Ascending aorta (tissue), 2 donors: ENCODE measurements at regions of chr12 and their contacts with region 1.

Region 1: DNA sequence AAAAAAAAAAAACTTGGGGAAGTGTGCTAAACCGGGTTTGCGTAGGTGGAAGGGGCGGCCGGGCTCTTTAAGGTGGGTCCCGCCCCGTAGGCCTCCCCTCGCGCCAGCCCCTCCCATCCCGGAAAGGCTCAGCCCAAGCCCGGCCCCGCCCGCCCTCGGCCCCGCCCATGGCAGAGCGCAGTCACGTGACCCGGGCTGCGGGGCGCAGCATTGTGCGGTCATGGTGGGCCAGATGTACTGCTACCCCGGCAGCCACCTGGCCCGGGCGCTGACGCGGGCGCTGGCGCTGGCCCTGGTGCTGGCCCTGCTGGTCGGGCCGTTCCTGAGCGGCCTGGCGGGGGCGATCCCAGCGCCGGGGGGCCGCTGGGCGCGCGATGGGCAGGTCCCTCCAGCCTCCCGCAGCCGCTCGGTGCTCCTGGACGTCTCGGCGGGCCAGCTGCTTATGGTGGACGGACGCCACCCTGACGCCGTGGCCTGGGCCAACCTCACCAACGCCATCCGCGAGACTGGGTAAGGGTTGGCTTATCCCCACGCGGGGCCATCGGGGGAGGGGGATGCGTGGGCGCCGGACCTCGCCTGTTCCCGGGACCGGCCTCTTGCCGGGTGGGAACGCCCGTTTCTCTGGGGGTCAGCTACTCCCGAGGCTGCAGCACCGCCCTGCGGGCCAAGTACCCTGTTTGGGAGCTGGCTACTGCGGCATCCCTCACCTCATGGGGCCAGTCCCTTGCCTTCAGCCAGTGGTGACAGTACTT is at the start of gene PLBD2:
- DNase-seq: peak; percentile 77 to 97
- H3K4me3 ChIP-seq: peak within 1 kb of the TSS; percentile 67 to 84
- H3K27ac ChIP-seq: peak within 1 kb of the TSS; percentile 86 to 88
- H3K4me1 ChIP-seq: peaks cover 0 to 14% of the 10 kb centered on the region in 2 donors
- H3K27me3 ChIP-seq: no peaks in the 10 kb centered on the region
- CTCF ChIP-seq: peak in 1 of 3 experiments; percentile 16
- total RNA-seq, gene PLBD2: 55.1 TPM

Region 2: GRCh38 chr12:113299619-113300237 is 58.8 kb before region 1 on chr12:
- intact Hi-C with region 1: loop called (anchors 1 kb)
- DNase-seq: peak; percentile 42 to 84
- H3K4me3 ChIP-seq: peak overlapping the region in 1 of 2 donors; percentile 33
- H3K27ac ChIP-seq: peak overlapping the region; percentile 73 to 95
- H3K4me1 ChIP-seq: peaks cover 14 to 30% of the 10 kb centered on the region in 2 donors
- H3K27me3 ChIP-seq: no peaks in the 10 kb centered on the region
- CTCF ChIP-seq: no peak

Region 3: DNA sequence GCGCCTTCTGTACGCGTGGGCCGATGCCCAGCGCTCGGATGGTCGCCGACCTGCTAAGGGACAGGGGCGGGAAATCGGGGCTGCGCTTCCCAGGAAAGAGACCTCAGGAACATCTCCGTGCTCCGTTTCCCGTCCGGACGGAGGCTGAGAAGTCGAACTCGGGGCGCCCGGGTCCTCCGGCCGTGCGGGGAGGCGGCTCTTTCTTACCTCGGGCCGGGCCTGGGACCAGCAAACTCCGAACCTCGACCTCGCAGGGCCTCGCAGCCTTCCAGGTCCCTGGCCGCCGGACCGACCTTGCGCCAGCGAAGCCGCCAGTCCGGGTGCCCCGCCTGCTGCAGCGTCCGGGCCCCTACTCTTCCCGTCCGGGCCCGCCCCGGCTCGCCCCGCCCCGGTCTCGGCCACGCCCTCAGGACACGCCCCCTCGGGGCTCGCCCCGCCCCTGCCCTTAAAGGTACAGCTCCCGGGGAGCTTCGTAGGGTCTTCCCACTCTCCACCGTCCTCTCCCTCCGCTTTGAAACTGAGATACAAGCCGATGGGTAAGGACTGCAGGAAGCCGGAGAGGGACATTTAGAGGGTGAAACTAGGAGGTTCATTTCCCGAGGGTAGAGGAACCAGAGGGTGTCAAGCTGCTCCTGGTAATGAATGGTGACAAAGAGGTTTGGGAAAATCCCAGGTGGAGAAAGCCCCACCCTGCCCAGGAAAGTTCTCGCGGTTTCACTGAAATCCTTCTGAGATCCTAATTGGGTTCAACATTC is 23.6 kb before region 1 on chr12 and contains the start of gene SLC8B1:
- intact Hi-C with region 1: loop called (anchors 1 kb)
- DNase-seq: peak; percentile 47 to 94
- H3K4me3 ChIP-seq: peak within 1 kb of the TSS; percentile 68 to 86
- H3K27ac ChIP-seq: peak within 1 kb of the TSS; percentile 69 to 78
- H3K4me1 ChIP-seq: peaks cover 0 to 20% of the 10 kb centered on the region in 2 donors
- H3K27me3 ChIP-seq: no peaks in the 10 kb centered on the region
- CTCF ChIP-seq: peak in 1 of 3 experiments; percentile 31
- total RNA-seq, gene SLC8B1: 114 TPM

Region 4: GRCh38 chr12:113965951-113966797 is 607.6 kb after region 1 on chr12 and contains the start of gene RBM19:
- intact Hi-C with region 1: loop called (anchors 2 kb)
- DNase-seq: peak; percentile 85 to 99
- H3K4me3 ChIP-seq: peak within 1 kb of the TSS; percentile 79 to 80
- H3K27ac ChIP-seq: peak within 1 kb of the TSS; percentile 50 to 67
- H3K4me1 ChIP-seq: peaks cover 0 to 6% of the 10 kb centered on the region in 2 donors
- H3K27me3 ChIP-seq: no peaks in the 10 kb centered on the region
- CTCF ChIP-seq: peak; percentile 87 to 94 (median 91)
- total RNA-seq, gene RBM19: 22.8 TPM